MCF 10A (cell line): ENCODE measurements at regions of chr16 and their contacts with region 1.

Region 1: GRCh38 chr16:14013571-14014282 is 57.4 kb upstream of the MRTFB start:
- DNase-seq: peak; percentile 95
- H3K4me3 Mint-ChIP-seq: peak overlapping the region; percentile 38
- H3K27ac Mint-ChIP-seq: peak overlapping the region; percentile 87
- H3K4me1 Mint-ChIP-seq: peaks cover 20% of the 10 kb centered on the region
- H3K27me3 Mint-ChIP-seq: no peaks in the 10 kb centered on the region
- CTCF ChIP-seq: no peak

Region 2: DNA sequence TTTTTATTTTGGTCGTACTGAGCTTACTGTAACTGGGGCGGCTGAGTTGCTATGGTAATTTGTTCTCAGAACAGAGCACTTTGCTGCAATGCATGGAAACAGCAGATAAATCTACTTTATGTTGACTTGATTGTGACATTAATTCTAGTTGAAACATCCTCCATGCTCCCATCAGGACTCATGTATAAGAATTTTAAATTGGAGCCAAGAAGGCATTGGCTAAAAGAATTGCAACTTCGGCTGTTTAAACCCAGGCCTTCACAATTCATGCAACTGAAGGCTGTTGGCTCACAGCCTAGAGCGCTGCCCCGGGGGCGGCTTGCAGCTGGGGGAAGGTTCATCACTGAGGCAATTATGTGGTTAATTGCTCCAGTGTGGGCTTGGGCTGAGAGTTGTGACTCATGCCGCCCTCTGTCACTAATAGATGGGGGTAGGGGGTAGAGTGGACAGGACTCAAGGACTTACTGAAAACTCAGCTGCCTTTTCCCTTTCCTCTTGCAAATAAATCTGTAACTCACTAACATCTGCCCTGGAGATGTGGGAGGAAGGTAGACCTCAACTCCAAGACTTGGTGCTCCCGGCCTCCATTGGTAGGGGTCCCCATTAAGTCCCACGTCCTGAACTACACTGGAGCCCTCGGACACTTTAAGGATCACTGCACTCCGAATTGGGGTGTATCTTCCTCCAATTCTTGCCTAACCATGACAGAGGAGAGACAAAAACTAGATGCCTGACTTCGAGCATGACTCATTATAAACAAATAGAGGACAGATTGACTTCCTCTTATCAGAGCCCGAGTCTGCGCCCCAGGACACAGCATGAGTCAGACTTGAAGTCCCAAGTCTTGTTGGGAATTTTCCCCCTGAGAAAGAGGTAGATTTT is 56.3 kb before region 1 on chr16:
- CTCF ChIA-PET with region 1: no interaction called
- POLR2A ChIA-PET with region 1: interaction called, 5 read pairs
- intact Hi-C with region 1: loop called (anchors 1 kb)
- DNase-seq: peak; percentile 96
- H3K4me3 Mint-ChIP-seq: peak overlapping the region; percentile 64
- H3K27ac Mint-ChIP-seq: peak overlapping the region; percentile 72
- H3K4me1 Mint-ChIP-seq: peaks cover 32% of the 10 kb centered on the region
- H3K27me3 Mint-ChIP-seq: no peaks in the 10 kb centered on the region
- CTCF ChIP-seq: no peak

Region 3: GRCh38 chr16:14042706-14043105 is 29.0 kb after region 1 on chr16:
- CTCF ChIA-PET with region 1: no interaction called
- POLR2A ChIA-PET with region 1: no interaction called
- intact Hi-C with region 1: no loop called
- DNase-seq: no peak
- H3K4me3 Mint-ChIP-seq: no peak overlapping the region
- H3K27ac Mint-ChIP-seq: no peak overlapping the region
- H3K4me1 Mint-ChIP-seq: no peaks in the 10 kb centered on the region
- H3K27me3 Mint-ChIP-seq: no peaks in the 10 kb centered on the region
- CTCF ChIP-seq: no peak